CD4-positive, alpha-beta T cell (primary cell): ENCODE measurements at regions of chr3 and their contacts with region 1.

Region 1: GRCh38 chr3:101069901-101070798 is 76.9 kb upstream of the ABI3BP start:
- DNase-seq: peak; percentile 29 to 72 (median 52)
- ATAC-seq: peak; percentile 77
- H3K4me3 ChIP-seq: no peak overlapping the region
- H3K4me3 Mint-ChIP-seq: no peak overlapping the region
- H3K27ac ChIP-seq: no peak overlapping the region
- H3K27ac Mint-ChIP-seq: no peak overlapping the region
- H3K4me1 ChIP-seq: no peaks in the 10 kb centered on the region
- H3K4me1 Mint-ChIP-seq: no peaks in the 10 kb centered on the region
- H3K27me3 ChIP-seq: peaks cover 4 to 7% of the 10 kb centered on the region in 2 experiments
- H3K27me3 Mint-ChIP-seq: peaks cover 19% of the 10 kb centered on the region
- CTCF ChIP-seq: peak; percentile 73

Region 2: DNA sequence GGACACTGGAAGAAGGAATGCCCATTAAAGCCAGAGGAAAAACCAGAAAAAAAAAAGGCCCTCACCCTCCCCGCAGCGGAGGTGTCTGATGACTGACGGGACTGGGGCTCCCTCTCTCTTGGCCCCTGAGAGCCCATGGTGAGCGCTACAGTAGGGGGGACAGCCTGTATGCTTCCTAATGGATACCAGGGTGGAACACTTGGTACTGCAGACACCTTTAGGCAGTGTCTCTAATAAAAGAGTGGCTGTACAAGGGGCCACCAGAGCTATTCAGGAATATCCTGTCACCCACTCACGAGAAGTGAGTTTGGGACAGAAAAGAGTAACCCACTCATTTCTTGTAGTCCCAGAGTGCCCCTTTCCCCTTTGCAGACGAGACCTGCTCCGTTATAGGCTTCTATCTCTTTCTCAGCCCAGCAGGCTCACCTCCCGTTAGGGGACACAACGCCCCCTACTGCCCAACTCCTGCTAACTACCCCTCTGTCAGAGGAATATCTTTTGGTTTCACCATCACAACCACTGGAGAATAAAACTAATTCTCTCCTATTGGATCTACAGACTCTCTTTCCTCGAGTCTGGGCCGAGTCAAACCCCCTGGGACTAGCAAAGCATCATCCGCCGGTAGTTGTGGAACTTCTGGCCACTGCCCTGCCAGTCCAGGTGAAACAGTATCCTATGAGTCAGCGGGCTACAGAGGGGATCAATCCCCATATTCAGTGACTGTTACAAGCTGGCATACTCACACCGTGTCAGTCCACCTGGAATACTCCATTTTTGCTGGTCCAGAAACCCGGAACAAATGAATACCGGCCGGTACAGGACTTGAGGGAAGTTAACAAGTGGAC is 566.0 kb after region 1 on chr3:
- CTCF ChIA-PET with region 1: no interaction called
- POLR2A ChIA-PET with region 1: no interaction called
- intact Hi-C with region 1: loop called (anchors 1 to 2 kb)
- DNase-seq: peak; percentile 58 to 75 (median 66)
- ATAC-seq: peak; percentile 94
- H3K4me3 ChIP-seq: no peak overlapping the region
- H3K4me3 Mint-ChIP-seq: no peak overlapping the region
- H3K27ac ChIP-seq: no peak overlapping the region
- H3K27ac Mint-ChIP-seq: no peak overlapping the region
- H3K4me1 ChIP-seq: peaks cover 6% of the 10 kb centered on the region
- H3K4me1 Mint-ChIP-seq: peaks cover 6% of the 10 kb centered on the region
- H3K27me3 ChIP-seq: no peaks in the 10 kb centered on the region
- H3K27me3 Mint-ChIP-seq: no peaks in the 10 kb centered on the region
- CTCF ChIP-seq: peak; percentile 61